ENCODE measurements at regions of chr10 and their contacts with region 1.

Region 1: GRCh38 chr10:61140765-61141392 is 196.9 kb upstream of the RHOBTB1 start:
- DNase-seq: peak; percentile 70
- H3K4me3 Mint-ChIP-seq: no peak overlapping the region
- H3K27ac Mint-ChIP-seq: no peak overlapping the region
- H3K4me1 Mint-ChIP-seq: peaks cover 11% of the 10 kb centered on the region
- H3K27me3 Mint-ChIP-seq: no peaks in the 10 kb centered on the region
- CTCF ChIP-seq: peak; percentile 62

Region 2: GRCh38 chr10:60816628-60817397 is 324.1 kb before region 1 on chr10:
- CTCF ChIA-PET with region 1: interaction called, 6 read pairs
- POLR2A ChIA-PET with region 1: no interaction called
- intact Hi-C with region 1: loop called (anchors 1 kb)
- DNase-seq: peak; percentile 81
- H3K4me3 Mint-ChIP-seq: no peak overlapping the region
- H3K27ac Mint-ChIP-seq: no peak overlapping the region
- H3K4me1 Mint-ChIP-seq: no peaks in the 10 kb centered on the region
- H3K27me3 Mint-ChIP-seq: no peaks in the 10 kb centered on the region
- CTCF ChIP-seq: peak; percentile 72

Region 3: GRCh38 chr10:61100887-61101286 is 40.0 kb before region 1 on chr10:
- CTCF ChIA-PET with region 1: no interaction called
- POLR2A ChIA-PET with region 1: no interaction called
- intact Hi-C with region 1: no loop called
- DNase-seq: no peak
- H3K4me3 Mint-ChIP-seq: no peak overlapping the region
- H3K27ac Mint-ChIP-seq: no peak overlapping the region
- H3K4me1 Mint-ChIP-seq: no peaks in the 10 kb centered on the region
- H3K27me3 Mint-ChIP-seq: peaks cover 11% of the 10 kb centered on the region
- CTCF ChIP-seq: no peak

Region 4: DNA sequence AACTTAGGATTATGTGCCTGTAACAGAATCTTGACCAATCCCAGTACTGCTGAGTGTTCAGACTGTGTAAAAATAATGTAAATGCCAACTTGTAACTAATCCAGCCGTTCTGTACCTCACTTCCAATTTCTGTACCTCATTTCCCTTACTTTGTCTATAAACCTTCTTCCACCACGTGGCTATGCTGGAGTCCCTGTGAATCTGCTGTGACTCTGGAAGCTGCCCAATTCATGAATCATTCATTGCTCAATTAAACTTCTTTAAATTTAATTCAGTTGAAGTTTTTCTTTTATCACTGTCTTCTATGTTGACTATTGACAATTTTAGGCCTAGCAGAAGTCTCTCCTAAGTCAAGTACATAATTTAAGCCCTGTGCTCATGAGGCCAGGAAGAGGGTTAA is 18.4 kb after region 1 on chr10:
- CTCF ChIA-PET with region 1: interaction called, 16 read pairs
- POLR2A ChIA-PET with region 1: interaction called, 6 read pairs
- intact Hi-C with region 1: no loop called
- DNase-seq: peak; percentile 72
- H3K4me3 Mint-ChIP-seq: no peak overlapping the region
- H3K27ac Mint-ChIP-seq: peak overlapping the region; percentile 5
- H3K4me1 Mint-ChIP-seq: peaks cover 16% of the 10 kb centered on the region
- H3K27me3 Mint-ChIP-seq: no peaks in the 10 kb centered on the region
- CTCF ChIP-seq: no peak

Region 5: GRCh38 chr10:61189912-61190311 is 49.0 kb after region 1 on chr10:
- CTCF ChIA-PET with region 1: interaction called, 25 read pairs
- POLR2A ChIA-PET with region 1: no interaction called
- intact Hi-C with region 1: loop called (anchors 2 kb)
- DNase-seq: no peak
- H3K4me3 Mint-ChIP-seq: no peak overlapping the region
- H3K27ac Mint-ChIP-seq: no peak overlapping the region
- H3K4me1 Mint-ChIP-seq: peaks cover 4% of the 10 kb centered on the region
- H3K27me3 Mint-ChIP-seq: no peaks in the 10 kb centered on the region
- CTCF ChIP-seq: no peak

Measured in MCF 10A (cell line).